Activated T-helper 1 cell treated with anti-CD3 and anti-CD28 coated beads, Interleukin-12 subunit alpha, Interleukin-12 subunit beta, Interleukin-2, Interleukin-4 antibody, amounts not matched to agents 30 ng/mL and 10 ng/mL and 1 ng/mL, durations not matched to agents 14 hours and 24 hours and 36 hours (primary cell): ENCODE measurements at regions of chr1 and their contacts with region 1.

Region 1: DNA sequence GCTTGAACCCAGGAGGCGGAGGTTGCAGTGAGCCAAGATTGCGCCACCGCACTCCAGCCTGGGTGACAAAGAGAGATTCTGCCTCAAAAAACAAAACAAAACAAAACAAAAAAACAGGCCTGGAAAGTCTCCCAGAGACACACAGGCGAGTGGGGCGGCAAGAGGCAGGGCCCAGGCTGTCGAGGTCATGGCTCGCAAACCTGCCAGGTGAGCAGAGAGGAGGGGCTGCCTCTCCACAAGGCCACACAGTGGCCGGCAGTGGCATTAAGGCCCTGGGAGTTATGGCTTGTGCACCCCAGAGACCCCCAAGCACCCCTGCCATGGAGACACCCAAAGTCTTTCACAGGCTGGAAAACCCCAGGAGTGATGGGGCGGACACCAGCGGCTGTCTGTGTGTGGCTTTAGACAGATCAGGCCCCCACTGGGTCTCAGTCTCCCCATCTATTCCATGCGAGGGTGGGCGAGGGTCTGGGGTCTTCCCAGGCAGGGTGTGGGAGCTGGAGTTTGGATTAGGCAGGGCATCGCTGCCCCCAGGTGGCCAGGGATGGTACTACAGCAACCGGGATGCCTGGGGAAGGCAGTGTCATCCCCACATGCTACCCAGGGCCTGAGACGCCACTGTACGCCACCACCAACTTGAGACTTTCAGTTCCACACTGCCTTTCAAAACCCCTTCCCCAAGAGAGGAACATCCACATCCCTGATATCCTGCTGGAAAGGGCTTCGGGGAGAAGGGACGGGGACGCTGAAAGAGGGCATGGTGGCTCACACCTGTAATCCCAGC is 7.3 kb upstream of the CTRC start:
- DNase-seq: peak; percentile 47
- H3K4me3 Mint-ChIP-seq: no peak overlapping the region
- H3K27ac Mint-ChIP-seq: no peak overlapping the region
- H3K4me1 Mint-ChIP-seq: peaks cover 13% of the 10 kb centered on the region
- H3K27me3 Mint-ChIP-seq: no peaks in the 10 kb centered on the region

Region 2: DNA sequence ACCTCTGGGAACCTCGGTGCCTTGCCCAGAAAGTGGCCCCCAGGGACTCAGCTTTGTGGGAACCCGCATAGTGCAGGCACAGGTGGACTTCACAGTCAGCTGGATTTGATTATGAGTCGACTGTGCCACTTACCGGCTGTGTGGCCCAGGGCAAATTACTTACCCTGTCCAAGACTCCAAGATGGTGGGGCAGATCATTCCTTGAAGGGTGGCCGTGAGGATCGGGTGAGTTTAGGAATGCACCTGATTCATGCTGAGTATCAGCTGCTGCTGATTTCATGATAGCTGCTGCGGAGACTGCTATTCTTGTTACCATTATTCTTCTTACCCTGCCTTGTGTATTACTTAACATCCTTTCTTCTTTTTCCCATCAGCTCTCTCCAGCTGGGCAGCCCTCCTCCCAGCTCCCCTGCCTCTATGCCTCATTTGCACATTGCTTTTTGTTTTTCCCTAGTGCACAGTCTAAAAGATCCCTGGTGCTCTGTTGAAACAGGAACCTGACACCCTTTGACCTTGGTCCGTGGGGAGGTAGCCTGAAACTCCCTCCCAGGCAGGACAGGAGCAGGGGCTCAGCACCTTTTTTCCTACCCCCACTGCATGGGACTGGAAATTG is 224.5 kb before region 1 on chr1:
- intact Hi-C with region 1: no loop called
- DNase-seq: no peak
- H3K4me3 Mint-ChIP-seq: no peak overlapping the region
- H3K27ac Mint-ChIP-seq: no peak overlapping the region
- H3K4me1 Mint-ChIP-seq: no peaks in the 10 kb centered on the region
- H3K27me3 Mint-ChIP-seq: peaks cover 27% of the 10 kb centered on the region

Region 3: GRCh38 chr1:15384301-15384901 is 46.6 kb before region 1 on chr1:
- intact Hi-C with region 1: loop called (anchors 5 kb)
- DNase-seq: no peak
- H3K4me3 Mint-ChIP-seq: peak overlapping the region; percentile 62
- H3K27ac Mint-ChIP-seq: no peak overlapping the region
- H3K4me1 Mint-ChIP-seq: peaks cover 6% of the 10 kb centered on the region
- H3K27me3 Mint-ChIP-seq: peaks cover 35% of the 10 kb centered on the region

Region 4: DNA sequence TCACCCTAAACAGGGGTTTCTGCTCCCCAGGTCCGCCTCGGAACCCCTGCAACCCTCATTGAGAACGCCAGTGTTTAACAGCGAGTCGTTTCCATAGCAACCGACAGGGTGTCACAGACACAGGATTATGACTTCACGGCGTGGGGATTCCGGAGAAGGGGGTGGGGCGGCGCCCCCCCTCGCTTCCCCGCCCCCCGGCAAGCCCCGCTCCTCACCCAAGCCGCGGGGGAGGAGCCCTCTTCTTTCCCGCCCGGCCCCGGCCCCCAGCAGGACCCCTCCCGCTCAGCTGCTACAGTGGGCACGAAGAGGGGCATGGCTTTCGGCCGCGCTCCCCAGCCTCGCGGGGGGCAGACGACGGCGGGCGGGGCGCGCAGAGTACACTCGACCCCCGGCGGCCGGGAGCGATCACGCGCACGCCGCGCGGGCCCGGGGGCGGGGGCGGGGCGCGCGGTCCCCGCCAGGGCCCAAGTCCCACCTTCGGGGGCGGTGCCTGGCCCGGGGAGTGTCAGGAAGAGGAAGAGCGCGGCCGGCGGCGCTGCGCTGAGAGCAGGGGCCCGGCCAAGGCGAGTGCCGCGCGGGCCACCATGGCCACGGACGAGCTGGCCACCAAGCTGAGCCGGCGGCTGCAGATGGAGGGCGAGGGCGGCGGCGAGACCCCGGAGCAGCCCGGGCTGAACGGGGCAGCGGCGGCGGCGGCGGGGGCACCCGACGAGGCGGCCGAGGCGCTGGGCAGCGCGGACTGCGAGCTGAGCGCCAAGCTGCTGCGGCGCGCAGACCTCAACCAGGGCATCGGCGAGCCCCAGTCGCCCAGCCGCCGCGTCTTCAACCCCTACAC is 21.4 kb before region 1 on chr1 and contains the start of gene EFHD2:
- intact Hi-C with region 1: loop called (anchors 2 kb)
- DNase-seq: peak; percentile 83
- H3K4me3 Mint-ChIP-seq: peak within 1 kb of the TSS; percentile 96
- H3K27ac Mint-ChIP-seq: peak within 1 kb of the TSS; percentile 94
- H3K4me1 Mint-ChIP-seq: peaks cover 47% of the 10 kb centered on the region
- H3K27me3 Mint-ChIP-seq: peaks cover 29% of the 10 kb centered on the region
- total RNA-seq, gene EFHD2: 100 and 101 TPM in 2 replicates

Region 5: DNA sequence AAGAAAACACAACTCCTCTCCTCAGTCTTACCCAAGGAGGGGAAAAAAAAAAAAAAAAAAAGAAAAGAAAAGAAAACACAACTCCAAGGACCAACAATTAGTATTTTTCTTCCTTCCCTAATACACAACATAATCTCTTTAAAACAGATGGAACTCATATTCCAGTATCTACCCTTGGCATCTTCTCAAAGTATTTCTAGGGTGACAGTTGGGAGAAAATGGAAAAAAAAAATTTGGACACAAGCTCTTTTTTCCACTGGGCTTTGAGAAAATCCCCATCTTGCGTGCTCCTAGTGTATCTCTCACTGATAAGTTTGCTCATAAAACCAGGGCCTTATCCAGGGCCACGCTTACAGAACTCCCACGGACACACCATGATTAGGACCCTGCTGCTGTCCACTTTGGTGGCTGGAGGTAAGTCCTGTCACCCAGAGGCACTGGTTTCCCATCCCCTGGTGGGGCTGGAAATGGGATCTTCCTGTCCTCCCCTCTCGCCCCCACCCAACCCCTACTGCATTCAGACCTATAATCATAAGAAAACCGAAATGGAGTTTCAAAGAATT is 44.9 kb after region 1 on chr1 and contains the start of gene CELA2B:
- intact Hi-C with region 1: no loop called
- DNase-seq: no peak
- H3K4me3 Mint-ChIP-seq: no peak within 1 kb of the TSS
- H3K27ac Mint-ChIP-seq: no peak within 1 kb of the TSS
- H3K4me1 Mint-ChIP-seq: no peaks in the 10 kb centered on the region
- H3K27me3 Mint-ChIP-seq: peaks cover 3% of the 10 kb centered on the region
- total RNA-seq, gene CELA2B: not detected in 2 replicates

Region 6: DNA sequence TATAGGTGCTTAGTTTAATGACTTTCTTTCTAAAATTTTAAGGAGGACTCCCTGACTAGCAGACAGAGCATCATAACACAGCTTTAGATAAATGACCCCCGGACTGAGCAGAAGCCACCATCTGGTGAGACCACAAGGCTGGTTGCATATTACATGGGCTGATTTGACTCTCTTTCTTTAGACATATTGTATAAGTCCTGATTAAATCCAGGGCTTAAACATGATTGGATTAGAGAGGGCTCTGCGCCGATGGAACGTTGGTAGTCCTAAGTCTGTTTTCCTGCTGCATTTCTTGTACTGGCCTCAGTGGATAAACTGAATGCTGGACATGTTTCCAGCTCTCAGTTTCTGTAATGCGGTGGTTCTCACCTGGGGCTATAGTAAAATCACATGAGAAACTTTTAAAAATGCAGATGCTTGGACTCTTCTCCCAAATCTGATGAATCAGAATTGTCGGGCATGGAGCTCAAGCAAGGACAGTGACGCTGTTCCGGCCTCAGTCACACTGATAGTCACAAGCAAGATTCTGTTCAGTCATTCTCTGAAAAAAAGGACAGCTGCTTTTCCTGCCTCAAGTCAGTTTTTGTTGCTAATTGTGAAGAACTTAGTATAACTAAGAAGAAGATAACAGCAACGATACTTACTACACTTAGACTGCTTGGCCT is 202.9 kb after region 1 on chr1:
- intact Hi-C with region 1: no loop called
- DNase-seq: no peak
- H3K4me3 Mint-ChIP-seq: no peak overlapping the region
- H3K27ac Mint-ChIP-seq: no peak overlapping the region
- H3K4me1 Mint-ChIP-seq: no peaks in the 10 kb centered on the region
- H3K27me3 Mint-ChIP-seq: no peaks in the 10 kb centered on the region